PC-9 (cell line): ENCODE measurements at regions of chr19 and their contacts with region 1.

Region 1: DNA sequence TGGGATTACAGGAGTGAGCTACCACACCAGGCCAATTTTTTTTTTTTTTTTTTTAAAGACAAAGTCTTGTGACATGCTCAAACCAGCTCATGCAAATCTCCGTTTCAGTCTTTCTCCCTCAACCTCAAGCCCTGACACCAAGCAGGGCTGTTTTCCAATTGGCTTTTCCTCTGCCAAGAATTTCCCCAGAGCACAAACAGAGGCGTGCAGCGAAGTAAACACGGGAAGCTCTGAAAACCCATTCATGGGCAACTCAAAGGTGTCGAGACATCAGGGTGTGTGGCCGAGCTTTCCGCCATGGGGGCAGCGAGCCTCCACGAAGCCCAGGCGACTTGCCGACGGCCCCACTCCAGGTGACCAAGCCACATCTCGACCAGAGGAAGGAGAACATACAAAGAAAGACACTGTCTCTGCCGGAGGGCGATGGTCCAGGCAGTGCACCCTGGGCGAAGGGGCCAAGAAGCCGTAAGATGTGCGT is 70.0 kb downstream of the INSR start:
- DNase-seq: no peak
- H3K4me3 ChIP-seq: no peak overlapping the region
- H3K27ac ChIP-seq: no peak overlapping the region
- H3K4me1 ChIP-seq: no peaks in the 10 kb centered on the region
- H3K27me3 ChIP-seq: no peaks in the 10 kb centered on the region
- CTCF ChIP-seq: no peak

Region 2: GRCh38 chr19:6225232-6225865 is 998.9 kb before region 1 on chr19:
- CTCF ChIA-PET with region 1: interaction called, 10 read pairs
- POLR2A ChIA-PET with region 1: no interaction called
- intact Hi-C with region 1: no loop called
- DNase-seq: no peak
- H3K4me3 ChIP-seq: no peak overlapping the region
- H3K27ac ChIP-seq: no peak overlapping the region
- H3K4me1 ChIP-seq: no peaks in the 10 kb centered on the region
- H3K27me3 ChIP-seq: no peaks in the 10 kb centered on the region
- CTCF ChIP-seq: no peak

Region 3: GRCh38 chr19:7152568-7152967 is 71.7 kb before region 1 on chr19:
- CTCF ChIA-PET with region 1: no interaction called
- POLR2A ChIA-PET with region 1: no interaction called
- intact Hi-C with region 1: no loop called
- DNase-seq: no peak
- H3K4me3 ChIP-seq: no peak overlapping the region
- H3K27ac ChIP-seq: no peak overlapping the region
- H3K4me1 ChIP-seq: no peaks in the 10 kb centered on the region
- H3K27me3 ChIP-seq: no peaks in the 10 kb centered on the region
- CTCF ChIP-seq: no peak

Region 4: DNA sequence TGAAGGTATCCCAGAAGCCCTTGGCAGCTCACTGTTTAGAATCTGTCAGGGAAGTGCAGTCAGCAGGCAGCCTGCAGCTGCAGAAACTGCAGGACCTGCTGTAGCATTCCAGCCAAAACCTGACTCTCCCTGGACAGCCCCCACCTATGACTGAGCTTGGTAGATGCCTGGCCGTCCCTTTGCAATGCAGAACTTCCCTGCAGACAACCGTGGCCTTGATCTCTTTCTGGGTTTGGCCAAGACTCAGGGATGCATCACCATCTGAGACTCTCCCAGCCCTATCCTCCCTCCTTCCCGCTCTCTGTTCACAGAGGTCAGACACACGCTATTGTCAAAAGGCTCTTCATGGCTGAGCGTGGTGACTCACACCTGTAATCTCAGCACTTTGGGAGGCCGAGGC is 55.3 kb before region 1 on chr19:
- CTCF ChIA-PET with region 1: no interaction called
- POLR2A ChIA-PET with region 1: interaction called, 17 read pairs
- intact Hi-C with region 1: no loop called
- DNase-seq: no peak
- H3K4me3 ChIP-seq: no peak overlapping the region
- H3K27ac ChIP-seq: no peak overlapping the region
- H3K4me1 ChIP-seq: no peaks in the 10 kb centered on the region
- H3K27me3 ChIP-seq: no peaks in the 10 kb centered on the region
- CTCF ChIP-seq: no peak

Region 5: DNA sequence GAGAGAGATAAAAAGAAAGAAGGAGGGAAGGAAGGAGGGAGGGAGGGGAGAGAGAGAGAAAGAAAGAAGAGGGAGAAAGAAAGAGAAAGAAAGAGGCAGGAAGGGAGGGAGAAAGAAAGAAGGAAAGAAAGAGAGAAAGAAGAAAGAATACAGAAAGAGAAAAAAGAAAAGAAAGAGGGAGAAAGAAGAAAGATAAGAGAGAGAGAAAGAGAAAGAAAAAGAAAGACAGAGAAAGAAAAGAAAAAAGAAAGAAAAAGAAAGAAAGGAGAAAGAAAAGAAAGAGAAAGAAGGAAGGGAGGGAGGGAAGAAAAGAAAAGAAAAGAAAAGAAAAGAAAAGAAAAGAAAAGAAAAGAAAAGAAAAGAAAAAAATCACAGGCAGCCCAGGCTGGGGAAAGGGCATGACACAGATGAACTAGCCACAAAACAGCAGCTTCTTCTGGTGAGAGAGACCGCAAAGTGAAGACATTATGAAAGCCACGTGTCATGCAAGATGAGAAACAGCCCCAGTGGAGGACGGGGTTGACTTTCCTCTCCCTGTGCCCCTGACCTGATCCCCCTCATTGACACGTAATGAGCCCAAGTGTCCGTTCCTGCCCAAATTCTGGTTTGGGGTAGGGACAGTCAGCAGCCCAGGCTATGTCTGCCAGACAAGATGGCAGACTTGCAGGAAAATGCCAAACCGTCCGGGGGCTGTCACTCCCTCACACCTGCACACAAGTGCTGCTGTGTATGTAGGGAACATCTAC is 32.1 kb before region 1 on chr19:
- CTCF ChIA-PET with region 1: no interaction called
- POLR2A ChIA-PET with region 1: no interaction called
- intact Hi-C with region 1: no loop called
- DNase-seq: no peak
- H3K4me3 ChIP-seq: no peak overlapping the region
- H3K27ac ChIP-seq: no peak overlapping the region
- H3K4me1 ChIP-seq: no peaks in the 10 kb centered on the region
- H3K27me3 ChIP-seq: no peaks in the 10 kb centered on the region
- CTCF ChIP-seq: no peak

Region 6: DNA sequence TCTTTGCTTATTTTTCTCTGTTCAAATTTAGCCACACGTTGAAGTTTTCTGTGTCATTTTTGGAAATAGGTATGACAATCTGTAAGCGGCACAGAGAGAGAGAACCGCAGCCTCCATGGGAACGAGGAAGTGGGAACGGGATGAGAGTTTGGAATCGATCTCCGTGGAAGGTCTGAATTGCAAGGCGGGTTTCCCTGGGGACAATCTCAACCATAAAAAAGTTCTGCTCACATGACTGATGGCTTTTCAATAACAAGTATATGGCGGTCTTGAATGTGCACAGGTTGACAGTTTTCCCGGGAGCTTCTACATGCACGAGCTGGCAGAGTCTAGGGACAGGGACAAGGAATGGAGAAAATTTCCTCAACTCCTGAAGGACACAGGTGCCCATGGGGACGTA is 20.9 kb before region 1 on chr19:
- CTCF ChIA-PET with region 1: no interaction called
- POLR2A ChIA-PET with region 1: no interaction called
- intact Hi-C with region 1: no loop called
- DNase-seq: no peak
- H3K4me3 ChIP-seq: no peak overlapping the region
- H3K27ac ChIP-seq: no peak overlapping the region
- H3K4me1 ChIP-seq: 0 out of 2 replicates have a peak, but pooled peaks cover 3% of the 10 kb centered on the region
- H3K27me3 ChIP-seq: no peaks in the 10 kb centered on the region
- CTCF ChIP-seq: no peak